Dendritic cell treated with granulocyte-macrophage colony-stimulating factor and Interleukin-4, amounts not matched to agents 40 ng/mL and 50 ng/mL, for 4 days (primary cell): ENCODE measurements at regions of chr4 and their contacts with region 1.

Region 1: GRCh38 chr4:78517050-78517652 is 34.4 kb upstream of the ANXA3 start:
- H3K4me3 Mint-ChIP-seq: no peak overlapping the region
- H3K27ac Mint-ChIP-seq: no peak overlapping the region
- H3K4me1 Mint-ChIP-seq: no peaks in the 10 kb centered on the region
- H3K27me3 Mint-ChIP-seq: peaks cover 2% of the 10 kb centered on the region

Region 2: DNA sequence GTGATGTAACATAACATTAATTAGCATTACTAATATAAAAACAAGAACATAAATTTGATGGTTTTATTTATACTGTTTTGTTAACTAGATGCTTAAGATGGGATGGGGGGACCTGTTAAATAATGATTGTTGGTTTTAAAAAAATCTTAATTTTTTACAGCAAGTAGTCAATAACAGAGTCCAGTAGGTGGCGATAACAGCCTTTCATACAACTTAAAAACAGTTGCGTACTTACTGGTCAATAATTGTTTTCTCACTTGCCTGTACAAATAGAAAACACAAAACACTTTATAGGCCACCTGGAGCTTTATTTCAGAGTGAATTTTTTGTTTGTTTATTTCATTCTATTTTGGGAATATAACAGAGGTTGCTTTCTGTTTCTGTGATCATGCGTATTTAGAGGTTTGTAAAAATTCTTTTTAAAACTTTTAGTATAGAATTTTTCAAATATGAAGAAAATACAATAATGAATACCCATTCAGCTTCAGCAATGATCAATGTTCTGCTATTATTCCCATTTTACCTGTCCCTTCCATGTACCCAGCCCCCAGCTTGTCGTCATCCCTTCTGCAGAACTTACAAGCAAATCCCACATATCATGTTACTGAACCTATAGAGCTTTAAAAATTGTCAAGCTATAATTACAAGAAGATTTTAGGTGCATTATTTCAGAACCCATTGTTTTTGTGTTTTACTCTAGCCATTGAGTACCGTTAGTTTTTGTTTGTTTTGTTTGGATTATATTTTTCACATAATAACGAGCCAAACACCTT is 557.4 kb before region 1 on chr4:
- intact Hi-C with region 1: loop called (anchors 1 kb)
- H3K4me3 Mint-ChIP-seq: no peak overlapping the region
- H3K27ac Mint-ChIP-seq: no peak overlapping the region
- H3K4me1 Mint-ChIP-seq: no peaks in the 10 kb centered on the region
- H3K27me3 Mint-ChIP-seq: no peaks in the 10 kb centered on the region

Region 3: GRCh38 chr4:78061939-78062570 is 455.1 kb before region 1 on chr4:
- intact Hi-C with region 1: loop called (anchors 10 kb)
- H3K4me3 Mint-ChIP-seq: no peak overlapping the region
- H3K27ac Mint-ChIP-seq: no peak overlapping the region
- H3K4me1 Mint-ChIP-seq: peaks cover 19% of the 10 kb centered on the region
- H3K27me3 Mint-ChIP-seq: peaks cover 51% of the 10 kb centered on the region

Region 4: DNA sequence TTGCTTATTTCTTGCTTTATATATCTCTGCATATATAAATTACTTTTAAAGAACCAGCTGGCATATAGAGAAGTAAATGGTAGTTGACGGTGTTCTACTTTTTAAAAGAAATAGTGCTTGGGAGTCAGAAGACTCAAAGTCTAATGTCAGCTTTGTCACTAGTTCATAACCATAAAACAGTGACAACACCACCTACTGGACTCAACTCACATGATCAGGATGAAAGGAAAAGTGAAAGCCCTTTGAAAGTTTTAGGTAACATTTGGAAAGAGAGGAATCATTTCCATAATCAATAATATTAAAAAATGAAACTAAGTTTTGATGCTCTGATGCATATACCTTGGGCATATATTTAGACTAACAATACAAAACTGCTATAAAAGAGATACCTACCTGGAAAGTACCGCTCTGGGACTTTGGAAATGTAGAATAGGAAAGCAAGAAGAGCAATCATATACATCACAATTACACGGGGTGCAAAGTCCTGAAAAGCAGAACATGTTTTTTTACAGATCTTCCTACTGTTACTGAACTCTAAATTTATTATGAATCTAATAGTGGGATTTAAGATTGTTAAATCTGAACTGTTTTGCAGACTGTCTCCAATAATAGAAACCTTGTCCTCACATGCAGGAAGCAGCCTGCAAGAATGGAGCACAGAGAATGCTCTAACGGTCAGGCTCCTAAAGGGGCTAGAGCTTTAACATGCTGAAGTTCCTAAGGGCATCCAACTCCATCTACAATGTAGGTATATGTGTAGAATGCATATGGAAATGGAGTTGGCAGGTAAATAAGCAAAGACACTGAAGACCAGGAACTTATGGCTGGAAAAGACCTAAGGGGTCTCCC is 406.5 kb after region 1 on chr4:
- intact Hi-C with region 1: no loop called
- H3K4me3 Mint-ChIP-seq: no peak overlapping the region
- H3K27ac Mint-ChIP-seq: no peak overlapping the region
- H3K4me1 Mint-ChIP-seq: peaks cover 7% of the 10 kb centered on the region
- H3K27me3 Mint-ChIP-seq: no peaks in the 10 kb centered on the region